Left cardiac atrium (tissue), 4 donors: ENCODE measurements at regions of chr4 and their contacts with region 1.

Region 1: DNA sequence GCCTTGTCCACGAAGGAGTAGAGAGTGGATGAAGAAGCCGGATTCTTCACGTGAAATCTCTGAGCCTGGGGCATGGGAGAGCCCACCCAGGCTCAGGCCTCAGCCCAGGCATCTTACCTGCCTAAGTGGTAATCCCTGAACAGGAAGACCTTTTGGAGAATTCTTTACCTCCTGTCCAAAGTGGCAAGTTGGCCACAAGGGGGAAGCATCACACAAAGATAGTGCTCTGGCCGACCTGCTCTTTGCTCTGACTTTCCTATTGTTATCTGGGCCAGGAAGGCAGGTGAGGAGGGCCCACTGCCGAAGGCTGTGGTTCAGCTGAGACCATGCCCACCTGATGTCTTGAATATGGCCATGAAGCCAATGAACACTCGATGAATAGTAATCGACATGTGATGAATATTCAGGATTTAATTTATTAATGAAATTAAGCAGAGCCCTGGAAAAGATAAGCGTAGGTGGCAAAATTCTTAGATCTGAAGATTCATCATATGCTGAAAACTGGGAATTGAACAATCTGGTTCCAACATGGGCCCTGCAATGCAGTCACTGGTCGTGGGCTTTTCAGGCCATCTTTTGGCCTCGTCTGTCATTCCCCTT is 93.8 kb downstream of the PDGFRA start:
- DNase-seq: peak; percentile 64
- ATAC-seq: peak; percentile 73 to 75

Region 2: GRCh38 chr4:53656421-53657046 is 666.4 kb before region 1 on chr4:
- intact Hi-C with region 1: no loop called
- DNase-seq: no peak
- ATAC-seq: peak; percentile 60 to 69

Region 3: DNA sequence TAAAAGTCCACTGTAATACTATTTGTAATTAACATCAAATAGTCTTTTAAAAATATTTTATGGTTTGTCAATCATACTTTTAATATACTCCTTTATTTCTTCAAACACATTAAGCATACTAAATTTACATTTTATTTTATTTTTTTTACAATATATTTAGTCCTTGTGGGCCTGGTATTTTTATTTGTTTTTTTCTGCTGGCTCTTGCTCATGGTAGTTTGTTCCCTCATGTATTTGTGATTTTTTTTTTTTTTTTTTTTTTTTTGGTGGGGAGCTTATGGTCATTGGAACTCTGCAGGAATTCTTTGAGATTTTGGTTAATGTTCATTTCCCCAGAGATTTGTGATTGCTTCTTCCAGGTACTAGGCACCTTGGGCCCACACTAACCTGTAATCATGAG is 91.6 kb after region 1 on chr4:
- intact Hi-C with region 1: no loop called
- DNase-seq: no peak
- ATAC-seq: no peak

Region 4: GRCh38 chr4:54440394-54441136 is 117.6 kb after region 1 on chr4:
- intact Hi-C with region 1: loop called in 1 of 2 experiments (anchors 5 kb)
- DNase-seq: no peak
- ATAC-seq: peak; percentile 27 to 49

Region 5: GRCh38 chr4:54840992-54841768 is 518.3 kb after region 1 on chr4:
- intact Hi-C with region 1: loop called in 1 of 2 experiments (anchors 5 kb)
- DNase-seq: peak; percentile 17
- ATAC-seq: peak; percentile 33 to 74

Region 6: GRCh38 chr4:54961357-54961975 is 638.5 kb after region 1 on chr4:
- intact Hi-C with region 1: loop called (anchors 5 to 10 kb)
- DNase-seq: no peak
- ATAC-seq: peak in 1 of 2 donors; percentile 45